ENCODE measurements at regions of chr17 and their contacts with region 1.

Region 1: GRCh38 chr17:67779098-67779672 is 46.1 kb upstream of the BPTF start:
- DNase-seq: peak; percentile 74
- ATAC-seq: peak; percentile 94
- H3K4me3 ChIP-seq: peak overlapping the region in 2 of 3 experiments; percentile 4 to 54; a peak in 2 of 6 replicates
- H3K27ac ChIP-seq: no peak overlapping the region
- H3K4me1 ChIP-seq: peaks cover 24% of the 10 kb centered on the region
- H3K27me3 ChIP-seq: no peaks in the 10 kb centered on the region; a peak in 1 of 5 replicates
- CTCF ChIP-seq: peak; percentile 83
- EP300 ChIP-seq: no peak
- POLR2A ChIP-seq: no peak
- RAD21 ChIP-seq: peak; percentile 62; the same call in 1 of the 2 replicates

Region 2: GRCh38 chr17:67717624-67718329 is 61.4 kb before region 1 on chr17 and contains the start of gene NOL11:
- CTCF ChIA-PET with region 1: interaction called, 5 read pairs
- POLR2A ChIA-PET with region 1: interaction called, 4 read pairs
- in situ Hi-C with region 1: no loop called
- intact Hi-C with region 1: loop called (anchors 1 kb)
- DNase-seq: peak; percentile 98
- ATAC-seq: peak; percentile 98
- H3K4me3 ChIP-seq: peak within 1 kb of the TSS; percentile 90 to 97 (median 94)
- H3K27ac ChIP-seq: peak within 1 kb of the TSS; percentile 95
- H3K4me1 ChIP-seq: peaks cover 33% of the 10 kb centered on the region
- H3K27me3 ChIP-seq: no peaks in the 10 kb centered on the region; a peak in 1 of 5 replicates
- CTCF ChIP-seq: peak; percentile 100
- EP300 ChIP-seq: peak; percentile 28 to 39; a peak in 1 of 4 replicates
- POLR2A ChIP-seq: peak; percentile 97
- RAD21 ChIP-seq: peak; percentile 95
- total RNA-seq, gene NOL11: 124 and 187 TPM in 2 replicates

Region 3: DNA sequence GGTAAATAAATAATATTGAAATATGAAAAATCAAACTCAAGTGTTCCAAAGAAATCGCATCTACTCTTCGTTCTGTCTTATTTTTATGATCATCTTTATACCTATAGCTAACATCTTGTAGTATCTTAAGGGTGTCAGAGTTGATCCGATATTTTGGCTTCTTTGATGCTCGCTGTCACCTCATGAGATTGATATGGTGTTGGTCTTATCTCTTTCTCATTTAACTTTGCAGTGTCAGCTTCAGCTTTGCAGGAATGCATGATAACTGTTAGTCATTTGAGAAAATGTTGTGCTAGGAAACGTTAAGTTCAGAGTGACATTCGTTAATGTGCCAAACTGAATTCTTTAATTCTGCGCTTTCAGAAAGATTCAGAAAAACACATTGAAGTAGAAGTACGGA is 42.0 kb before region 1 on chr17:
- CTCF ChIA-PET with region 1: no interaction called
- POLR2A ChIA-PET with region 1: no interaction called
- in situ Hi-C with region 1: no loop called
- intact Hi-C with region 1: no loop called
- DNase-seq: no peak
- ATAC-seq: no peak
- H3K4me3 ChIP-seq: no peak overlapping the region
- H3K27ac ChIP-seq: no peak overlapping the region
- H3K4me1 ChIP-seq: peaks cover 10% of the 10 kb centered on the region; the same call in 1 of the 2 replicates
- H3K27me3 ChIP-seq: no peaks in the 10 kb centered on the region
- CTCF ChIP-seq: no peak
- EP300 ChIP-seq: no peak
- POLR2A ChIP-seq: no peak
- RAD21 ChIP-seq: no peak

Measured in HepG2 (cell line).